CD8-positive, alpha-beta T cell (primary cell): ENCODE measurements at regions of chr4 and their contacts with region 1.

Region 1: DNA sequence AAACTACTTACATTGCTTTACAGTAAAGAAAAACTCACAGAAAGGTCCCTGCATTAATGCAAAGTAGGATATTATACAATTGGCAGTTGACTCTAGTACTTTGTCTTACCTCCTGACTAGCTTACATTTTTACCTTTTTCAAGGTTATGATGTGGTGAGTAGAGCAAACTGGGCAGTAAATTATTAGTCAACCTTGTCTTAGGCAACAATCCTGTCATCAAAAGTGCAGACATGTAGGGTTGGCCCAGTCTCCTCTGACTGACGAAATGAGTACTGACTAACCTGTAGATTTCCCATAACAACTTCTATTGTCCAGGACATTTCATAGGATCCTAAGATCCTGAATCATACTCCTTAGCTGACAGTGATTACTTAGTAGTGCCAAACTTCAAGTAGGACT is 142.0 kb upstream of the NUDT6 start:
- DNase-seq: no peak
- ATAC-seq: no peak
- H3K4me3 ChIP-seq: no peak overlapping the region
- H3K4me3 Mint-ChIP-seq: no peak overlapping the region
- H3K27ac ChIP-seq: no peak overlapping the region
- H3K27ac Mint-ChIP-seq: no peak overlapping the region
- H3K4me1 ChIP-seq: no peaks in the 10 kb centered on the region
- H3K4me1 Mint-ChIP-seq: no peaks in the 10 kb centered on the region
- H3K27me3 ChIP-seq: no peaks in the 10 kb centered on the region
- H3K27me3 Mint-ChIP-seq: no peaks in the 10 kb centered on the region
- CTCF ChIP-seq: no peak

Region 2: DNA sequence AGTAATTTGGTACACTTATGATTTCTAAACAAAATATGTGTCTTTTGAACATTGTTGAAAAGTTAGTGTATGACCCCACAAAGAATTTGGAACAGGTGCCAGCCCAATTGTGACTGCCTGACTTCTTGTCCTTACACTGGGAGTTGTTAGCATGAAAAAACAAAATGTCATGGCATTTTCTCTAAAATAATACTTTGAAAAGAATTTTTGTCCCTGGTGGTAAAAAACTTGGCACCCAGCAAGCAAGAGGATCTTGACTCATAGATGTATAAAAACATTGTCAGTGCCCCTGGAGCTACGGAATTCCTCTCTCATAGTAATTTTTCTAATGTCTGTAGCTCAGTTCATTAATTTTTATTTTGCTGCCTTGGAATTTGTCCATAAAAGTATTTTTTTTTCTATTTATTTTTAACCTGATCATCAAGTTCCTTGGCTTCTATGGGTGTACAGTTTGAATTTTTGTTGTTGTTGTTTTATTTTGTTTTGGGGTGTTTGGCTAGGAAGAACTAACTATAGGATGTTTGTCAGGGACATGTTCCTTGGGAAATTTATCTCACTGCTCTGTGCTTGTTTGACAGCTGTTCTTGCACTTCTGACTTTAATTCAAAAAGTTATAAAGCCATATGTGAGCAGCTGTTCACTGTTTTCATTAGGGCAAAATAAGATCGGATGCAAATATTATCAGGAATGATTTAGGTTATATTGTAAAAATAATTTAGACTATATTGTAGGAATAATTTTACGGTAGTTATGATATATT is 46.6 kb before region 1 on chr4:
- CTCF ChIA-PET with region 1: no interaction called
- POLR2A ChIA-PET with region 1: no interaction called
- intact Hi-C with region 1: loop called in 1 of 2 experiments (anchors 1 kb)
- DNase-seq: no peak
- ATAC-seq: no peak
- H3K4me3 ChIP-seq: no peak overlapping the region
- H3K4me3 Mint-ChIP-seq: no peak overlapping the region
- H3K27ac ChIP-seq: no peak overlapping the region
- H3K27ac Mint-ChIP-seq: no peak overlapping the region
- H3K4me1 ChIP-seq: no peaks in the 10 kb centered on the region
- H3K4me1 Mint-ChIP-seq: no peaks in the 10 kb centered on the region
- H3K27me3 ChIP-seq: no peaks in the 10 kb centered on the region
- H3K27me3 Mint-ChIP-seq: no peaks in the 10 kb centered on the region
- CTCF ChIP-seq: no peak

Region 3: GRCh38 chr4:123077330-123077729 is 12.9 kb after region 1 on chr4:
- CTCF ChIA-PET with region 1: no interaction called
- POLR2A ChIA-PET with region 1: no interaction called
- intact Hi-C with region 1: no loop called
- DNase-seq: no peak
- ATAC-seq: no peak
- H3K4me3 ChIP-seq: no peak overlapping the region
- H3K4me3 Mint-ChIP-seq: no peak overlapping the region
- H3K27ac ChIP-seq: no peak overlapping the region
- H3K27ac Mint-ChIP-seq: no peak overlapping the region
- H3K4me1 ChIP-seq: no peaks in the 10 kb centered on the region
- H3K4me1 Mint-ChIP-seq: no peaks in the 10 kb centered on the region
- H3K27me3 ChIP-seq: no peaks in the 10 kb centered on the region
- H3K27me3 Mint-ChIP-seq: no peaks in the 10 kb centered on the region
- CTCF ChIP-seq: no peak